Common myeloid progenitor, CD34-positive (primary cell): ENCODE measurements at regions of chr3 and their contacts with region 1.

Region 1: GRCh38 chr3:112321867-112322649 is 10.9 kb upstream of the CD200 start:
- DNase-seq: peak in 1 of 3 donors; percentile 34
- H3K4me3 ChIP-seq: no peak overlapping the region
- H3K27ac ChIP-seq: no peak overlapping the region
- H3K4me1 ChIP-seq: peaks cover 0 to 6% (median 5%) of the 10 kb centered on the region in 4 experiments
- H3K27me3 ChIP-seq: no peaks in the 10 kb centered on the region

Region 2: GRCh38 chr3:112376996-112377395 is 54.9 kb after region 1 on chr3:
- CTCF ChIA-PET with region 1: no interaction called
- POLR2A ChIA-PET with region 1: no interaction called
- DNase-seq: peak; percentile 26 to 78 (median 65)
- H3K4me3 ChIP-seq: no peak overlapping the region
- H3K27ac ChIP-seq: no peak overlapping the region
- H3K4me1 ChIP-seq: peaks cover 5 to 65% (median 28%) of the 10 kb centered on the region in 4 experiments
- H3K27me3 ChIP-seq: no peaks in the 10 kb centered on the region

Region 3: DNA sequence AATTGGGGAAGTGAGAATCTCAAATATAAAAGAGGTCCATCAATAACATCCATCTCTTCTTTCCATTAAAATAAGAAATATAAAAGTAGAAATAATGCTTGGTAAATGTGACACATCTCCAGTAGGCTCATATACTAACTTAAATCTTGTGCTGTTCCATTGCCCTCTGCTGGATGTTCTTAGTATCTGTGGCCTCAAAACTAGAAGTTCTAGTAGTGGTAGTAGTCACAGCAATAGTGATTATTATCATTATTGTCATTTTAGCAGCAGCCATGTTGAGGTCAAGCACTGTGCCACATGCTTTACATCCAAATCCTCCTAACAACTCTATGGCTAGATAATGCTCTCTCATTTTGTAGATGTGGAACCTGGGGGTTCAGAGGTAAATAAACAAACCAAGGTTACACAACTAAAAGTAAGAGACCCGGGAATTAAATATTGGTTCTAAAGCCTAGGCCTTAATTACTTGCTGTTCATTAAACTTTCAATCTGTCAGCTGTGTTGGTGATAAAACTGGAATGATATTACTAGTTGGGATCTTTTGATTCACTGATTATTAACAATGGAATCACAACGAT is 197.5 kb after region 1 on chr3:
- CTCF ChIA-PET with region 1: interaction called, 33 read pairs
- POLR2A ChIA-PET with region 1: no interaction called
- DNase-seq: peak; percentile 82 to 89 (median 87)
- H3K4me3 ChIP-seq: no peak overlapping the region
- H3K27ac ChIP-seq: no peak overlapping the region
- H3K4me1 ChIP-seq: peaks cover 4 to 15% (median 5%) of the 10 kb centered on the region in 4 experiments
- H3K27me3 ChIP-seq: no peaks in the 10 kb centered on the region